OCI-LY7 (cell line): ENCODE measurements at regions of chrX and their contacts with region 1.

Region 1: DNA sequence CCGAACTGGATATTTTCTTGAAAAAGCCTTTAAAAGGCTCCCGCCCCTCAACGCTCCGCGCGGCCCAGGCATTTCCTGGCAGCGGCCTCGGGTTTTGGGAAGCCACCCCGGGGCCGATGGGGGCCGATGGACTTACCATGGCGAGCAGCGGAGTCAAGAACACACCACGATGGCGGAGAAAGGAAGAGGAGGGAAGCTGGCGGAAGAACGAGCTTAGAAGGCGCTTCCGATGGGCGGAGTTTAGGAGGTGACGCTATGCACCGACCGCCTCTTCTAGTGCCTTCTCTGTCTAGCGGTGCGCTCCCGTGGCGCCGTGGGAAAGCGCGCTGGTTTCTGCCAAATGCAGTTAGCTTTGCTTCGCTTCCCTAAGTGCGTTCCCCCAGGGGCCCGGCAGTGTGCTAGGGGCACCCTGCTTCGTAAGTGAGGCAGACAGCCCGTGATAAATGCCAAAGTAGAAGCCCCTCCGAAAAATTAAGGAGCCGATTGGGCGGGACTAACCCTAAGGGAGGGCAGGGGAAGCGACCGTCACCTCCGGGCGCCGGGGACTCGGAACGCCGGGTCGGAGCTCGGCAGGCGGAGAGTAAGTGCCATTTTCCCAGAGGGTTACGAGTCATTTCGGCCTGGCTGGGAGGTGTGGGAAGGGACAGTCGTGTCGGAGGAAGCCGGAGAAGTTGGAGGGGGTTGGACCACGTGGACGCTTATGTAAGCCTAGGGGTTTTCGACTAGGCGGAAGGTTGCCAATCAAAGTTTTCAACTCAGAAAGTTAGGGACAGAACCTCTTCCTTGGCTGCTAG is at the start of gene RPL39:
- DNase-seq: peak; percentile 90
- H3K4me3 ChIP-seq: peak within 1 kb of the TSS; percentile 99
- H3K27ac ChIP-seq: peak within 1 kb of the TSS; percentile 95
- H3K4me1 ChIP-seq: peaks cover 30% of the 10 kb centered on the region
- CTCF ChIP-seq: no peak
- total RNA-seq, gene RPL39: 1,897 and 2,118 TPM in 2 replicates

Region 2: DNA sequence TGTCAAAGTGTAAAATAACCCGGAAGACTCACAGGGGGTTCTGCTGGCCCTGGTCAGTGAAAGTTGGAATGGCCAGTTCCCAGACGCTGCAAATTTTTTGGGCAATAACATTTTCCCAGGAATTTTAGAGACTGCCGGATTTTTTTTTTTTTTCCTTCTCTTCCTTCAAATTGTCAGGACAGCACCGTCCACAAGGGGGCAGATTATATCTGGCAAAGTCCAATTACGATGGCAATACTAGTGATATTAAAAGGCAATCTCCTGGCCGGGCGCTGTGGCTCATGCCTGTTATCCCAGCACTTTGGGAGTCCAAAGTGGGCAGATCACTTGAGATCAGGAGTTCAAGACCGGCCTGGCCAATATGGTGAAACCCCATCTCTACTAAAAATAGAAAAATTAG is 302.9 kb before region 1 on chrX:
- CTCF ChIA-PET with region 1: no interaction called
- POLR2A ChIA-PET with region 1: no interaction called
- intact Hi-C with region 1: no loop called
- DNase-seq: peak; percentile 45
- H3K4me3 ChIP-seq: no peak overlapping the region
- H3K27ac ChIP-seq: no peak overlapping the region
- H3K4me1 ChIP-seq: no peaks in the 10 kb centered on the region
- CTCF ChIP-seq: peak; percentile 73

Region 3: GRCh38 chrX:119775517-119776238 is 16.0 kb before region 1 on chrX:
- CTCF ChIA-PET with region 1: interaction called, 3 read pairs
- POLR2A ChIA-PET with region 1: interaction called, 11 read pairs
- intact Hi-C with region 1: no loop called
- DNase-seq: peak; percentile 34
- H3K4me3 ChIP-seq: peak overlapping the region; percentile 29
- H3K27ac ChIP-seq: peak overlapping the region; percentile 51
- H3K4me1 ChIP-seq: peaks cover 10% of the 10 kb centered on the region
- CTCF ChIP-seq: no peak

Region 4: DNA sequence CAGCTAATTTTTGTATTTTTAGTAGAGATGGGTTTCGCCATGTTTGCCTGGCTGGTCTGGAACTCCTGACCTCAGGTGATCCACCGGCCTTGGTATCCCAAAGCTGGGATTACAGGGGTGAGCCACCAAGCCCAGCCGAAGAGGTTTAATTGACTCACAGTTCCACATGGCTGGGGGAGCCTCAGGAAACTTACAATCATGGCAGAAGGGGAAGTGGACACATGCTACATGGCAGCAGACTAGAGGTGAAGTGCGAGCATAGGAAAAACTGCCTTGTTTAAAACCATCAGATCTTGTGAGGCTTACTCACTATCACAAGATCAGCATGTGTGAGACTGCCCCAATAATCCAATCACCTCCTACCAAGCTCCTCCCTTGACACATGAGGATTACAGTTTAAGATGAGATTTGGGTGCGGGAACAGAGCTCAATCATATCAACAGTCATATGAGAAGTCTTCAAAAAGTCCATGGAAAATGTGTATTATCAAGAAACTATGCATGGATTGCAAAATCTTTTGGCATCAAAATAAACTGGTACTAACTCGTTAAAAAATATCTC is 25.6 kb after region 1 on chrX:
- CTCF ChIA-PET with region 1: no interaction called
- POLR2A ChIA-PET with region 1: no interaction called
- intact Hi-C with region 1: no loop called
- DNase-seq: no peak
- H3K4me3 ChIP-seq: no peak overlapping the region
- H3K27ac ChIP-seq: no peak overlapping the region
- H3K4me1 ChIP-seq: peaks cover 8% of the 10 kb centered on the region
- CTCF ChIP-seq: no peak

Region 5: GRCh38 chrX:119852382-119853353 is 61.0 kb after region 1 on chrX and contains the start of gene UPF3B:
- CTCF ChIA-PET with region 1: no interaction called
- POLR2A ChIA-PET with region 1: interaction called, 7 read pairs
- intact Hi-C with region 1: loop called (anchors 5 kb)
- DNase-seq: peak; percentile 98
- H3K4me3 ChIP-seq: peak within 1 kb of the TSS; percentile 96
- H3K27ac ChIP-seq: peak within 1 kb of the TSS; percentile 44
- H3K4me1 ChIP-seq: peaks cover 15% of the 10 kb centered on the region
- CTCF ChIP-seq: no peak
- total RNA-seq, gene UPF3B: 8.7 and 10.8 TPM in 2 replicates

Region 6: GRCh38 chrX:119871599-119872395 is 80.2 kb after region 1 on chrX and contains the starts of genes NDUFA1 and RNF113A:
- CTCF ChIA-PET with region 1: no interaction called
- POLR2A ChIA-PET with region 1: interaction called, 5 read pairs
- intact Hi-C with region 1: loop called (anchors 1 kb)
- DNase-seq: peak; percentile 90
- H3K4me3 ChIP-seq: peak within 1 kb of the TSS; percentile 91
- H3K27ac ChIP-seq: peak within 1 kb of the TSS; percentile 93
- H3K4me1 ChIP-seq: peaks cover 18% of the 10 kb centered on the region
- CTCF ChIP-seq: no peak
- total RNA-seq, gene NDUFA1: 61.3 and 82.1 TPM in 2 replicates
- total RNA-seq, gene RNF113A: 32.8 and 37.4 TPM in 2 replicates

Region 7: GRCh38 chrX:119880552-119881437 is 89.2 kb after region 1 on chrX:
- CTCF ChIA-PET with region 1: no interaction called
- POLR2A ChIA-PET with region 1: interaction called, 3 read pairs
- intact Hi-C with region 1: loop called (anchors 2 kb)
- DNase-seq: peak; percentile 76
- H3K4me3 ChIP-seq: no peak overlapping the region
- H3K27ac ChIP-seq: peak overlapping the region; percentile 37
- H3K4me1 ChIP-seq: peaks cover 15% of the 10 kb centered on the region
- CTCF ChIP-seq: peak; percentile 77